AG04449 (cell line): ENCODE measurements at regions of chr5 and their contacts with region 1.

Region 1: DNA sequence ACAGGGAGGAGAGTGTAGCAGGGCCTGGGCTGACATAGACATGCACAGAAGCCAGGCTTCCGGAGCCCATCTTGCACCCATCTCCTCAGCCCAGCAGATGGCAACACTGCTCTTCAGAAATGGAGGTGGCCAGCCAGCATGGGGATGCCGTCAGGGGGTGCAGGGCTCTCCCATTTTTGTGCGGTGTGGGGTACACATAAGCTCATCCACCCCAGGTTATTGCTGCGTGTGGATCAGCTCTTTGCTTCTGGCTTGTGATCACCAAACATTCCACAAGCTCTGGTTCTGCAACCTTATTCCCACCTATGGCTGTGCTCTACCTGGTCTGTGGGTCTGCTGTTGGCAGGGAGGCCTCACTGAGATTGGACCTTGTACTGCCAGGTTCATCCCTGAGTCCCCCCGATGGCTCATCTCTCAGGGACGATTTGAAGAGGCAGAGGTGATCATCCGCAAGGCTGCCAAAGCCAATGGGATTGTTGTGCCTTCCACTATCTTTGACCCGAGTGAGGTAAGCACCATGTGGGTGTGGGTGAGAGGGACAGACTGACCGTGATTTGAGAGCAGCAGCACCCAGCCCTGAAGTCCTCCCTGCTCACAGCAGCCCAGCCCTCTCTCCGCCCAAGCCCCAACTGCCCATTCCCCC is 17.3 kb downstream of the SLC22A5 start:
- DNase-seq: no peak
- H3K4me3 ChIP-seq: no peak overlapping the region
- CTCF ChIP-seq: peak; percentile 94

Region 2: DNA sequence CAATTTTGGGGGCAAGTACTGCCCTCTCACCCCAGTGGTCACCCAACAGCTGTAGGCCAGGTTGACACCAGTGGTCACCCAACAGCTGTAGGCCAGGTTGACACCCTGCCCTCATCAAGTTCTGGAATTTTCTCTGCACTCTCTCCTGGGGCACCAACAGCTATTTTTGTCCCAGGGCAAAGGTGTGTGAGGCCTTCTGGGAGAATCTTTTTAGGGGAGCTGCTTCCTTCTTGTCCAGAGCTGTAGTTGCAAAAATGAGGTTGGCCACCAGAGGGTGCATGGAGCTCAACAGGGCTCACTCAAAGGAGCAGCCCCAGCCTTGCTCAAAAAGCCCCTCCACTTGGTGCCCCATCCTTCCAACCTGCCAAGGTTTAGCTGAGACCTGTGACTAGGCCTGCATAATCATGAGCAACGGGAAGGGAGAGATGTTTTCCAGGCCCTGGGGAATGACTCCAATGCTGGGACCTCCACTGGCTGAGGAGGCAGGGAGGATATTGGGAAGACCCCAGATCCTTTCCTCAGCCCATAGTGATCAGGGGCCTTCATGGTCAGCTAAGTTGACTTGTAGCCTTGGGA is 148.5 kb before region 1 on chr5:
- CTCF ChIA-PET with region 1: interaction called, 19 read pairs
- POLR2A ChIA-PET with region 1: no interaction called
- DNase-seq: no peak
- H3K4me3 ChIP-seq: no peak overlapping the region
- CTCF ChIP-seq: peak; percentile 85

Region 3: GRCh38 chr5:132419502-132420468 is 33.0 kb after region 1 on chr5:
- CTCF ChIA-PET with region 1: interaction called, 18 read pairs
- POLR2A ChIA-PET with region 1: no interaction called
- DNase-seq: no peak
- H3K4me3 ChIP-seq: no peak overlapping the region
- CTCF ChIP-seq: peak; percentile 87

Region 4: DNA sequence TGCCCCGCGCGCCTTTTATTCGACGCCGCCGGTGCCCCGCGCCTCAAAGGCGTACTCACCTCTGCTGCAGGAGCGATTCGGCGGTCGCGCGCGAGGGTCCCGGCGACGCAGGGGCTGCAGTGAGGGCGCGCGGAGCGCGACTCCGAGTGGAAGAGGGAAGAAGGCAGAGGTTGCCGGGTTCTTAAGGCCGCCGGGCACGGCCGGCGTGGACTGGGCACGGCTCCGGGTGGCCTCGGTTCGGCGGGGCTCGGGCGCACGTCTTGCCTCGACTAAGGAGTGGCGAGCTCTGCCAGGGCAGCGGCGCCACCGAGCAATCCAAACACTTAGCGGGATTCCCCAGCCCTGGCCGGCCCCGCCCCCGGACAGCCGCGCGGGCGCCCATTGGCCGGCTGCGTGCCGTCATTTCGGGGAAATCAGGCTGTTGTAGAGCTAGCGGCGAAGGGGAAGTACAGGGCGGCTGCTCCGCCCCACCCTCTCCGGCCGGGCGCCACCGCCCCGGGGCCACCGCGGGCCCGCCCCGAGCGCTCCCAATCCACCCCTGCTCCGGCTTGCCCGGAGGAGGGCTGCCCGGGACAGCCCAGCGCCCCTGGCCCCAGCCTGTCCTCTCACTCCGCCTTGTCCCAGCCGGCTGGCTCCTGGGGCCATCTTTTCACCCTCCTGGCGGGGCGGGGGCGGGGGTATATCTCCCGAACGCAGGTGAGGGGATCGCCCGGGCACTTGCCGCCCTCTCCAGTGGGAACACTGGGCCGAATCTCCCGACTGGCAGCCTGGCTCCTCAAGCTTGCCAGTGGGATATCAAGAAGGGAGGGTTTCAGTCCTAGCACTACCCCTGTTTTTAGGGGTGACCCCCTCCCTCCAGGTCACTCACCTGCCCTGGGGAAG is 104.0 kb after region 1 on chr5 and contains the start of gene IRF1:
- CTCF ChIA-PET with region 1: interaction called, 610 read pairs
- POLR2A ChIA-PET with region 1: interaction called, 18 read pairs
- DNase-seq: no peak
- H3K4me3 ChIP-seq: peak within 1 kb of the TSS; percentile 92
- CTCF ChIP-seq: peak; percentile 29

Region 5: GRCh38 chr5:132546108-132546507 is 159.3 kb after region 1 on chr5:
- CTCF ChIA-PET with region 1: no interaction called
- POLR2A ChIA-PET with region 1: no interaction called
- DNase-seq: no peak
- H3K4me3 ChIP-seq: no peak overlapping the region
- CTCF ChIP-seq: no peak

Region 6: GRCh38 chr5:132704875-132705274 is 318.1 kb after region 1 on chr5:
- CTCF ChIA-PET with region 1: interaction called, 14 read pairs
- POLR2A ChIA-PET with region 1: no interaction called
- DNase-seq: no peak
- H3K4me3 ChIP-seq: no peak overlapping the region
- CTCF ChIP-seq: no peak

Region 7: GRCh38 chr5:132866342-132867045 is 479.7 kb after region 1 on chr5 and contains the starts of genes GDF9 and UQCRQ:
- CTCF ChIA-PET with region 1: interaction called, 21 read pairs
- POLR2A ChIA-PET with region 1: no interaction called
- DNase-seq: peak; percentile 98
- H3K4me3 ChIP-seq: peak within 1 kb of the TSS; percentile 92
- CTCF ChIP-seq: peak; percentile 53